Sigmoid colon (tissue), 7 donors: ENCODE measurements at regions of chr19 and their contacts with region 1.

Region 1: GRCh38 chr19:43463381-43464136 is 1.8 kb downstream of the LYPD3 start:
- DNase-seq: peak; percentile 98
- H3K4me3 ChIP-seq: peak overlapping the region; percentile 59 to 73 (median 69)
- H3K27ac ChIP-seq: peak overlapping the region; percentile 88 to 93 (median 90)
- H3K4me1 ChIP-seq: peaks cover 0 to 18% (median 13%) of the 10 kb centered on the region in 4 donors
- H3K27me3 ChIP-seq: no peaks in the 10 kb centered on the region
- CTCF ChIP-seq: no peak
- EP300 ChIP-seq: no peak
- POLR2A ChIP-seq: no peak

Region 2: GRCh38 chr19:43474986-43475705 is 11.6 kb after region 1 on chr19:
- intact Hi-C with region 1: loop called (anchors 1 kb)
- DNase-seq: peak; percentile 98
- H3K4me3 ChIP-seq: peak overlapping the region; percentile 9 to 50 (median 40)
- H3K27ac ChIP-seq: peak overlapping the region; percentile 75 to 80 (median 78)
- H3K4me1 ChIP-seq: peaks cover 0 to 10% (median 8%) of the 10 kb centered on the region in 4 donors
- H3K27me3 ChIP-seq: no peaks in the 10 kb centered on the region
- CTCF ChIP-seq: no peak
- EP300 ChIP-seq: peak in 3 of 4 donors; percentile 56 to 88 (median 77)
- POLR2A ChIP-seq: peak in 1 of 2 donors; percentile 41

Region 3: DNA sequence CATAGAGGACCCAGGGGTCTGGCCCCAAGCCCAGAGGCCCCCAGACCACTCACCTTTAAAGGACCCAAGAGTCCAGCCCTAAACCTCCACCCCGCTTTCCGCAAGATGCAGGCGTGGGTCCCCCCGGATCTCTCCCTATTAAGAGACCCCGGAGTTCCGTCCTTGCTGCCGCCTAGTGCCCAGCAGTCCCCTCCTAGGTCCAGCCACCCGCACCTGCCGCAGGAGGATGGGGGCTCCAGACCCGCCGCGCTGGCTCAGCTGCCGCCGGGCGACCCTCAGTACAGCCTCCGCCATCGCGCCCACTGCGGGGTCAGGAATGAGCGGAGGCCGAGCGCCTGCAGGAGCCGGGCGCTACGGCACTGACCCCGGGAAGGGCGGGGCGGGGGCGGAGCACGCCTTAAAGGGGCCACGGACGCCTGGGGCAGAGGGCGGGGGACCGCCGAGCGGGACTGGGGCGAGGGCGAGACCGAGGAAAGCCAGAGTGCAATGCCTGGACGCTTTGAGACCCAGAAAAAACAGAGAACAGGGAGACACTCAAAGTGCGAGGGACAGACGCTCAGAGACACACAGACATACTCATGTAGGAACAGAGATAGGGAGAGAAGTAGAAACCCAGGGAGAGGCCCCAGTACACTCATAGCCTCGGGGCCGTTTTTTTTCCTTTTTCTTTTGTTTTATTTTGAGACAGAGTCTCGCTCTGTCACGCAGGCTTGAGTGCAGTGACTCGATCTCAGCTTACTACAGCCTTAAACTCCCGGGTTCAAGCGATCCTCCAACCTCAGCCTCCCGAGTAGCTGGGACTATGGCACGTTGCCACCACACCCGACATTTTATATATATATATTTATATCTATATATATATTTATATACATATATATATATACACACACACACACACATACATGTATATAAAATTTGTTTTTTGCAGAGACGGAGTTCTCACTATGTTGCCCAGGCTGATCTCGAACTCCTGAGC is 63.6 kb after region 1 on chr19 and contains the start of gene ETHE1:
- intact Hi-C with region 1: loop called (anchors 5 kb)
- DNase-seq: peak; percentile 93
- H3K4me3 ChIP-seq: peak within 1 kb of the TSS; percentile 58 to 83 (median 82)
- H3K27ac ChIP-seq: peak within 1 kb of the TSS; percentile 80 to 88 (median 88)
- H3K4me1 ChIP-seq: peaks cover 0 to 34% (median 31%) of the 10 kb centered on the region in 4 donors
- H3K27me3 ChIP-seq: no peaks in the 10 kb centered on the region
- CTCF ChIP-seq: peak in 1 of 4 experiments; percentile 17
- EP300 ChIP-seq: no peak
- POLR2A ChIP-seq: peak; percentile 67 to 89
- total RNA-seq, gene ETHE1: 40.7 to 57.9 (median 52.1) TPM